ENCODE measurements at regions of chr1 and their contacts with region 1.

Region 1: DNA sequence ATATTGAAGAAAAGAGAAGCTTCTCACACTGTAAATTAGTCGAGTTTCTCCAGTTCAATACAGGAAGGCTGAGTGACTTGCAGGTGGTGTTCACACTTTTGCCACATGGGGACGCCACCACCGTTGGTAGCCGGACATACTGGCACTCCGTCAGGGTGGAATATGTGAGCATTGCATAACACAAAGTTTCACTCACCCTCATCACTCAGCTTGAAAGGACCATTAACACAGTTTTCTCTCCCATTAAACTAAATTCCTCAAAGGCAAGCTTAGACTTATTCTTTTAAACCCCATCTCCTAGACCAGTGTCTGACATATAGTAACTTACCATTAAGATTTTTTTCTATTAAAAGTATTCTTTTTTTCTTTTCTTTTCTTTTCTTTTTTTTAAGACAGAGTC is 105.3 kb upstream of the SERBP1 start:
- DNase-seq: peak; percentile 92
- H3K4me3 ChIP-seq: no peak overlapping the region
- H3K27ac ChIP-seq: no peak overlapping the region
- H3K4me1 ChIP-seq: peaks cover 10% of the 10 kb centered on the region
- H3K27me3 ChIP-seq: no peaks in the 10 kb centered on the region
- CTCF ChIP-seq: peak; percentile 93 to 94
- POLR2A ChIP-seq: no peak

Region 2: GRCh38 chr1:67441183-67441582 is 94.3 kb before region 1 on chr1:
- CTCF ChIA-PET with region 1: no interaction called
- POLR2A ChIA-PET with region 1: no interaction called
- dilution Hi-C with region 1: no loop called
- intact Hi-C with region 1: no loop called
- DNase-seq: peak; percentile 80
- H3K4me3 ChIP-seq: no peak overlapping the region
- H3K27ac ChIP-seq: no peak overlapping the region
- H3K4me1 ChIP-seq: peaks cover 8% of the 10 kb centered on the region
- H3K27me3 ChIP-seq: no peaks in the 10 kb centered on the region
- CTCF ChIP-seq: no peak
- POLR2A ChIP-seq: no peak

Region 3: DNA sequence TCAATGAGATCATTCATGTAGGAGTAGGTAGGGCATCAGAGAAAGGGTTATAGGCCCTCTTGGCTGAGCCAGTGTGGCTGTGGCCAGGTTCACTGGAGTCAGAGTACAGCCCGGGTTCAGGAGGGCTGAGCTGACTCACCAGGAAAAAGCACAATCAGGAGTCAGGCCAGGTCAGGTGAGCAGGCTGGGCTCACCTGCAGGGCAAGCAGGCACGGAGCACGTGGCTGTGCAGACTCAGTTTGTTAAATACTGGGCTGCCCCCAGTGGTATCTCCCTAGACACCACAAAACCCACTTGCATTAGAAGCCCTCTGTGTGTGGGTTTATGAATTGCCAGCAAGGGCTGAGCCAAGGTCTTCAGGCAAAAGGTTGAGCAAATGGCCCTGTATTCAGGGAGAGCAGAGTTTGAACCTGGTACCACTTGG is 16.9 kb after region 1 on chr1:
- CTCF ChIA-PET with region 1: interaction called, 10 read pairs
- POLR2A ChIA-PET with region 1: no interaction called
- dilution Hi-C with region 1: no loop called
- intact Hi-C with region 1: no loop called
- DNase-seq: no peak
- H3K4me3 ChIP-seq: no peak overlapping the region
- H3K27ac ChIP-seq: no peak overlapping the region
- H3K4me1 ChIP-seq: peaks cover 3% of the 10 kb centered on the region
- H3K27me3 ChIP-seq: peaks cover 0 to 3% of the 10 kb centered on the region in 2 experiments
- CTCF ChIP-seq: no peak
- POLR2A ChIP-seq: no peak

Region 4: DNA sequence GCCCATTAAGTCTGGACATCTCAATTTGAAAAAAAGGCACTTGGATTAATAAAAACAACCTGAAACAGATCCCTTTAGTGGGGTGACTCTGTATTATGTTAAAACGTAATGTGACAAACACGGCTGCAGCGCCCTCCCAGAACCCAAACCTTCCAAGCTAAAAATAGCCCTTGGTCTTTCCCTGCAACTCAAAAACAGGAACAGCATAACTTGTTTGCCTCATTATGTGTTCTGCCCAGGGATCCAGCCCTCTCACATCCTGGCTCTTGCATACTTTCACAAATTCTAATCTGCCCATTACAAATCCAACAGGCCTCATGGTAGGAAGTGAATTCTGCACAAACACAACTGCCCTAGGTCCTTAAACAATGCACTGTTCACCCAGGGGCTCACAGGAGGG is 54.9 kb after region 1 on chr1:
- CTCF ChIA-PET with region 1: no interaction called
- POLR2A ChIA-PET with region 1: no interaction called
- dilution Hi-C with region 1: no loop called
- intact Hi-C with region 1: loop called (anchors 2 kb)
- DNase-seq: peak; percentile 97
- H3K4me3 ChIP-seq: no peak overlapping the region
- H3K27ac ChIP-seq: peak overlapping the region; percentile 38
- H3K4me1 ChIP-seq: peaks cover 3% of the 10 kb centered on the region
- H3K27me3 ChIP-seq: no peaks in the 10 kb centered on the region
- CTCF ChIP-seq: no peak
- POLR2A ChIP-seq: no peak

Region 5: GRCh38 chr1:67832737-67833601 is 297.5 kb after region 1 on chr1 and contains the start of gene GNG12:
- CTCF ChIA-PET with region 1: interaction called, 12 read pairs
- POLR2A ChIA-PET with region 1: no interaction called
- dilution Hi-C with region 1: no loop called
- intact Hi-C with region 1: loop called (anchors 5 kb)
- DNase-seq: peak; percentile 83
- H3K4me3 ChIP-seq: peak within 1 kb of the TSS; percentile 55 to 86 (median 55)
- H3K27ac ChIP-seq: peak within 1 kb of the TSS; percentile 90
- H3K4me1 ChIP-seq: peaks cover 29% of the 10 kb centered on the region
- H3K27me3 ChIP-seq: no peaks in the 10 kb centered on the region
- CTCF ChIP-seq: no peak
- POLR2A ChIP-seq: peak; percentile 85
- total RNA-seq, gene GNG12: 145 and 152 TPM in 2 replicates